GM10248 (cell line): ENCODE measurements at regions of chr11 and their contacts with region 1.

Region 1: GRCh38 chr11:33065445-33066178 is 26.2 kb downstream of the TCP11L1 start:
- DNase-seq: peak; percentile 60
- CTCF ChIP-seq: peak; percentile 98

Region 2: GRCh38 chr11:32809313-32809712 is 256.3 kb before region 1 on chr11:
- CTCF ChIA-PET with region 1: interaction called, 44 read pairs
- POLR2A ChIA-PET with region 1: no interaction called
- DNase-seq: peak; percentile 74
- CTCF ChIP-seq: peak; percentile 79

Region 3: GRCh38 chr11:32893343-32894148 is 172.1 kb before region 1 on chr11:
- CTCF ChIA-PET with region 1: interaction called, 12 read pairs
- POLR2A ChIA-PET with region 1: no interaction called
- DNase-seq: peak; percentile 68
- CTCF ChIP-seq: peak; percentile 53

Region 4: GRCh38 chr11:32968541-32968940 is 97.1 kb before region 1 on chr11:
- CTCF ChIA-PET with region 1: interaction called, 155 read pairs
- POLR2A ChIA-PET with region 1: no interaction called
- DNase-seq: no peak
- CTCF ChIP-seq: no peak

Region 5: DNA sequence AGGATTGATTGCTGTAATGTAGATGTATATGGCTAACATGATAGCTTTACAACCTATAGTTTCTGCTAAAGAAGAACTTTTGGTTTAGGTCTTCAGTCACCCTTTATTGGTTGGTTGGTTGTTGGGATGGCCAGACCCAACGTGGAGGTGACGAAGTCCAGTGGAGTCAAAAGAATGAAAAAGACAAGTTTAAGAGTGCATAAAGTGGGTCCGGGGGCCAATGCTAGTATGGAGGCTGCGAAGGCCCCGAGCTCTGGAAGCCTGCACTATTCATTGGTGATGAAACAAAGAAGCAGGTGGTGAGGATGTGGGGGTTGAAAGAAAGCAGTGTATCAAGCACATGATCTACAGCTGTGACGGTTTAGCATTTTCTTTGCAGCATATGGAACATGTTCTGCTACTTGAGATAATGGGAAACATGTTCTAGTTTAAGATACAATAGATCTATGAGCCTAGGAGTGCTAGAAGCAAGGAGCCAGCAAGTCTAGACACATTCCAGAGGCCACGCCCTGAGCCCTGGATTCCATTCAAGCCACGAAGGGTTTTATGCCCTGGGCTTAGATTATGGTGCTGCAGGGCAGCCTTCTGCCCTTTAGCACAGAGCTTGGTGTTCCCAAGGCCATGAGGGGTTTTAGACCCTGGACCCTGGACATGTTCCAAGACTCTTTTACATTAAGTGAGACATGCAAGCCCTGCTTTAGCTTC is 19.9 kb before region 1 on chr11:
- CTCF ChIA-PET with region 1: interaction called, 44 read pairs
- POLR2A ChIA-PET with region 1: interaction called, 3 read pairs
- DNase-seq: no peak
- CTCF ChIP-seq: no peak

Region 6: DNA sequence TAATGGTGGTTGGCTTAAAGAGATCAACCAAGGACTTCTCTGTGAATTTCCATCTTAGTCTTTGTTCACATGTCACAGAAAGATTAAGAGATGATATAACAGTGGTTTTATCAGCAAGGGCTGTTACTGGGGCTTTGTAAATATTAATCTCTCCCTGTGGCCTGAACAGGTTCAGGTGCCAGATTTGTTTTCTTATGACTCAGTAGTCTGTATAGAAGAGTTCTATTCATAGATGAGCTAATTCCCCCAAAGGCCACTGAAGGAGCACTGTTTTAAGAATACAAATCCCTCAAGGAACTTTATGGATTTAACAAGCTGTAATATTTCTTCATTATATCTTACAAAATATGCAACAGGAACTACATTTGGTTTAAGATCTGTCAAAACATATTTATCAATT is 24.2 kb after region 1 on chr11:
- CTCF ChIA-PET with region 1: interaction called, 21 read pairs
- POLR2A ChIA-PET with region 1: no interaction called
- DNase-seq: no peak
- CTCF ChIP-seq: no peak

Region 7: DNA sequence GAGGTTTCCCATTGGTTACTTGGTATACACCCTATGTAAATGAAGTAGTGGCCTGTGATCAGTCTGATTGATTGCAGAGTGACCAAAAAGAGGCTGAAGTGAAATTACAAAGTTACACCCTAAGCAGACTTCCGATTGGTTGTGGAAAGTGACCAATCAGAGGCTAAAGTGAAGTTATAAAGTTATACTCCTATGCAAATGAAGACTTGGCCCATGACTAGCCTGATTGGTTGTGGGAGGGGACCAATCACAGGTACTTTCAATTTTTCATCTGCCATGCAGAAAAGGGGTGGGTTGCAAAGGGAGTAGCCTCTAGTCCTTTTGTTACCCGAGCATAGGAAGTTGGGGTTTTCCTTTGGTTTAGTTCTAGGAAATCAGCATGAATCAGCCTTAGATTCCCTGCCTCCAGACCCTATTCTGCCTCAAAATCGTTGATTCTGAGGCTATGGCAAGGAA is 113.8 kb after region 1 on chr11:
- CTCF ChIA-PET with region 1: no interaction called
- POLR2A ChIA-PET with region 1: no interaction called
- DNase-seq: no peak
- CTCF ChIP-seq: no peak